ENCODE measurements at regions of chr2 and their contacts with region 1.

Region 1: DNA sequence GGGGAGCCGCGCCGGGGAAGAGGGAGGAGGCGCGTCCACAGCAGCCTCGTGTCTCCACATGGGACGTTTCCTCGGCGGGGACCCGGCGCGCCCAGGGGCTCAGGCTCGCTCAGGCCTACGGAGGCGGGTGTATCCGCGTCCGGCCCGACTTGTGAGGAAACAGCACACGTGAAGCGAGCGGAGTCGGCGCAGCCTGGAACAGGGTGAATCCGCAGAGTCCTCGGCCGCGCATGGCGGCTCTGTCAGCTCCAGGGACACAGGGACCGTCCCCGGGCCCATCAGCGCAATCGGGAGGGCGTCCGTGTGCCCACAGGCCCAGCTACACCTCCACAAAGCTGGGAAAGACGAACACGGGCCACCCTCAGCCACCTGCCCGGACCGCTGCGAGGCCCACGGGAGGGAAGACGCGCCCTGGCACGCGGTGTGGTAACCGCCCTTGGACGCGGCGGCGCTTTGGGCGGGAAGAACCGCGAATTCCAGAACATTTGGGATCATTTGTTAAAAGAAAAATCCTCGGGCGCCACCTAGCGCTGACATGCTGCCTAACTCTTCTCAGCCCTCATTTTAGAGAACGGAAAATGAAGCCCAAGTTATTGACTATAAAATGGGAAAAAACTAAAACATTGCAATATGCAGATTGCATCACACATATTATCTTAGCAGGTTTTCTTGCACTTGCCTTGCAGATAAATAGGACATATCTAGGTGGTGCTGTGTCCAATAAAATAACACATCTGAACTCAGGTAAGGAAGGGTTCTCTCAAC is 40.4 kb downstream of the TMEM18 start:
- DNase-seq: peak; percentile 89
- H3K4me3 ChIP-seq: no peak overlapping the region
- H3K27ac ChIP-seq: peak overlapping the region in 1 of 2 experiments; percentile 39; a peak in 1 of 4 replicates
- H3K4me1 ChIP-seq: peaks cover 0 to 11% of the 10 kb centered on the region in 2 experiments; a peak in 2 of 4 replicates
- H3K27me3 ChIP-seq: no peaks in the 10 kb centered on the region
- CTCF ChIP-seq: peak; percentile 82
- EP300 ChIP-seq: no peak
- RAD21 ChIP-seq: peak; percentile 96

Region 2: GRCh38 chr2:290090-290722 is 346.6 kb before region 1 on chr2:
- CTCF ChIA-PET with region 1: interaction called, 24 read pairs
- POLR2A ChIA-PET with region 1: no interaction called
- DNase-seq: peak; percentile 83
- H3K4me3 ChIP-seq: peak overlapping the region; percentile 36 to 55
- H3K27ac ChIP-seq: no peak overlapping the region
- H3K4me1 ChIP-seq: peaks cover 0 to 12% of the 10 kb centered on the region in 2 experiments; a peak in 1 of 4 replicates
- H3K27me3 ChIP-seq: peaks cover 26% of the 10 kb centered on the region
- CTCF ChIP-seq: peak; percentile 59
- EP300 ChIP-seq: no peak
- RAD21 ChIP-seq: peak; percentile 71

Region 3: DNA sequence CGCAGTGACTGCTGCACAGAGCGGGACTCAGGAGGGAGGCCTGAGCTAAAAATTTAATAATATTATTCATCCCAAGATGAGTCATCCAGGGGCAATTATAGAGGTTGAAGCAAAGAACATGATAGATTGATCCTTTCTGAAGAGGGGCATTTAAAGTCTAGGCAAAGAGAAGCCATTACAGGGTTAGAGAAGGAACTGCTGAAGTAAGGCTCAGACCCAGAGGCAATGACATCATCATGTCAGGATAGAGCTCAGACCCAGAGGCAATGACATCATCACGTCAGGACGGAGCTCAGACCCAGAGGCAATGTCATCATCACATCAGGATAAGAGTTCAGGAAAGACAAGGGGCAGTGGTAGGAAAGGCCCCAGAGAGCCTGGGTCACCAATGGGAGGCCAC is 143.6 kb before region 1 on chr2:
- CTCF ChIA-PET with region 1: no interaction called
- POLR2A ChIA-PET with region 1: no interaction called
- DNase-seq: no peak
- H3K4me3 ChIP-seq: no peak overlapping the region
- H3K27ac ChIP-seq: no peak overlapping the region
- H3K4me1 ChIP-seq: peaks cover 0 to 23% of the 10 kb centered on the region in 2 experiments; a peak in 2 of 4 replicates
- H3K27me3 ChIP-seq: no peaks in the 10 kb centered on the region
- CTCF ChIP-seq: no peak
- EP300 ChIP-seq: no peak
- RAD21 ChIP-seq: no peak

Region 4: GRCh38 chr2:567850-568638 is 68.8 kb before region 1 on chr2:
- CTCF ChIA-PET with region 1: interaction called, 58 read pairs
- POLR2A ChIA-PET with region 1: no interaction called
- DNase-seq: no peak
- H3K4me3 ChIP-seq: no peak overlapping the region
- H3K27ac ChIP-seq: peak overlapping the region in 1 of 2 experiments; percentile 100; a peak in 2 of 4 replicates
- H3K4me1 ChIP-seq: peaks cover 0 to 41% of the 10 kb centered on the region in 2 experiments; a peak in 2 of 4 replicates
- H3K27me3 ChIP-seq: no peaks in the 10 kb centered on the region
- CTCF ChIP-seq: no peak
- EP300 ChIP-seq: no peak
- RAD21 ChIP-seq: no peak

Region 5: DNA sequence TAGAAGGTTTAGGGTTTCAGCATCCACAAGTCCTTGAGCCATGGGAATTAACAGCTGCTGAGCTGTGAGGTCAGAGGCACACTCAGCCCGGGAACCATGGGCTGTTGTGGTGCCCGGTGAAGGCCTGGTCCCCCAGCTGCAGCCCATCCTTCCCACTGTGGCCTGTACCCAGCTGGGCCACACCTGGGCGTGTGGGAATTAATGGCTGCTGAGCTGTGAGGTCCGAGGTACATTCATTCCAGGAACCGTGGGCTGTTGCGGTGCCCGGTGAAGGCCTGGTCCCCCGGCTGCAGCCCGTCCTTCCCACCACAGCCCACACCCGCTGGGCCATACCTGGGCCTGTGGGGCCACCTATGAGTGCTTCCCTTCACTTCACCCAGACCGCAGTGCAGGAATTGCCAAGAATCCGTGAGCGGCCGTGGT is 15.1 kb after region 1 on chr2:
- CTCF ChIA-PET with region 1: interaction called, 11 read pairs
- POLR2A ChIA-PET with region 1: no interaction called
- DNase-seq: no peak
- H3K4me3 ChIP-seq: no peak overlapping the region; a peak in 1 of 4 replicates
- H3K27ac ChIP-seq: no peak overlapping the region
- H3K4me1 ChIP-seq: no peaks in the 10 kb centered on the region; a peak in 1 of 4 replicates
- H3K27me3 ChIP-seq: no peaks in the 10 kb centered on the region
- CTCF ChIP-seq: no peak
- EP300 ChIP-seq: no peak
- RAD21 ChIP-seq: no peak

Region 6: GRCh38 chr2:1070616-1071015 is 433.8 kb after region 1 on chr2:
- CTCF ChIA-PET with region 1: no interaction called
- POLR2A ChIA-PET with region 1: no interaction called
- DNase-seq: peak; percentile 76
- H3K4me3 ChIP-seq: no peak overlapping the region; a peak in 1 of 4 replicates
- H3K27ac ChIP-seq: no peak overlapping the region
- H3K4me1 ChIP-seq: peaks cover 0 to 8% of the 10 kb centered on the region in 2 experiments; a peak in 2 of 4 replicates
- H3K27me3 ChIP-seq: no peaks in the 10 kb centered on the region
- CTCF ChIP-seq: no peak
- EP300 ChIP-seq: peak in 1 of 2 experiments; percentile 37; a peak in 1 of 4 replicates
- RAD21 ChIP-seq: peak; percentile 63

Measured in SK-N-SH (cell line).